Activated CD4-positive, alpha-beta T cell treated with anti-CD3 and anti-CD28 coated beads, Interleukin-2, amount 10 ng/mL, durations not matched to agents 24 days and 14 days (primary cell): ENCODE measurements at regions of chr4 and their contacts with region 1.

Region 1: GRCh38 chr4:23614284-23614892 is 275.5 kb downstream of the PPARGC1A start:
- DNase-seq: peak; percentile 56
- H3K4me3 Mint-ChIP-seq: no peak overlapping the region
- H3K27ac Mint-ChIP-seq: no peak overlapping the region
- H3K4me1 Mint-ChIP-seq: no peaks in the 10 kb centered on the region
- H3K27me3 Mint-ChIP-seq: no peaks in the 10 kb centered on the region

Region 2: GRCh38 chr4:23135792-23136645 is 478.4 kb before region 1 on chr4:
- intact Hi-C with region 1: loop called (anchors 5 kb)
- DNase-seq: peak; percentile 67
- H3K4me3 Mint-ChIP-seq: no peak overlapping the region
- H3K27ac Mint-ChIP-seq: no peak overlapping the region
- H3K4me1 Mint-ChIP-seq: no peaks in the 10 kb centered on the region
- H3K27me3 Mint-ChIP-seq: no peaks in the 10 kb centered on the region